Activated naive CD4-positive, alpha-beta T cell treated with anti-CD3 and anti-CD28 coated beads for 36 hours (primary cell): ENCODE measurements at regions of chr12 and their contacts with region 1.

Region 1: DNA sequence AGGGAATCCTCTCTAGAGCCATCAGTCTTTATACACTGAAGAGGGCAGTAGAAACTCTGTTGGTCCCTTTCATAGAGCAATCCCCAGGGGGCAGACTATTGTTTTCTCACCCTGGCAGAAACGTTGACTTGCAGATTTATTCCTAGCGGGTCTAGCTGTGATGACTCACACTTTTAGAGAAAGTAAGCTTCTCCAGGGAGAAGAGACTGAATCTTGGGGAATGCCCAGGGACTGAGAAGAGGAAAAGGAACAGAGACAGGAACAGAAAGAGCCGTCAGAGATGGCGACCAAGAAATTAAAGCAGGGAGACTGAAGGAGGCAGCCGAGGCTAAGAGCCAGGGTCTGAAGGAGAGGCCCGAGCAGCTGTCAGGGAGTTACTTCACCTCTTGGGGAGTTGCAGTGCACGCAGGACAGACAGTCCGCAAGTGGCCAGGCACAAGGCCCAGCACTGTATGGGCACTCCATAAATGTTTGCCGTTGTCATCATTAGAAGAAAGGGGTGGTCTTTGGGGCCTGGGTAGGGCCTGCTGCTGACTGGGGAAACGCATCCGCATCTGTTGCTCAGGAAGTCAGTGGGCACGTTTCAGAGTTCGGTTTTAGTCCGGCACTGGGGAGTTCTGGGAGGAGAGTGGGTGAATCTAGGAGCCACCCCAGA is 13.0 kb downstream of the PLEKHG6 start:
- DNase-seq: peak; percentile 55
- H3K4me3 Mint-ChIP-seq: peak overlapping the region; percentile 40
- H3K27ac Mint-ChIP-seq: peak overlapping the region; percentile 83
- H3K4me1 Mint-ChIP-seq: peaks cover 39% of the 10 kb centered on the region
- H3K27me3 Mint-ChIP-seq: no peaks in the 10 kb centered on the region

Region 2: GRCh38 chr12:6341417-6342139 is 18.1 kb after region 1 on chr12 and contains the start of gene TNFRSF1A:
- CTCF ChIA-PET with region 1: interaction called, 39 read pairs
- intact Hi-C with region 1: loop called (anchors 1 kb)
- DNase-seq: peak; percentile 73
- H3K4me3 Mint-ChIP-seq: peak within 1 kb of the TSS; percentile 17
- H3K27ac Mint-ChIP-seq: no peak within 1 kb of the TSS
- H3K4me1 Mint-ChIP-seq: peaks cover 38% of the 10 kb centered on the region
- H3K27me3 Mint-ChIP-seq: no peaks in the 10 kb centered on the region
- total RNA-seq, gene TNFRSF1A: 38.1 to 41.3 TPM

Region 3: GRCh38 chr12:6367065-6367968 is 43.9 kb after region 1 on chr12:
- CTCF ChIA-PET with region 1: interaction called, 17 read pairs
- intact Hi-C with region 1: loop called (anchors 1 kb)
- DNase-seq: peak; percentile 62
- H3K4me3 Mint-ChIP-seq: no peak overlapping the region
- H3K27ac Mint-ChIP-seq: no peak overlapping the region
- H3K4me1 Mint-ChIP-seq: peaks cover 29% of the 10 kb centered on the region
- H3K27me3 Mint-ChIP-seq: no peaks in the 10 kb centered on the region

Region 4: DNA sequence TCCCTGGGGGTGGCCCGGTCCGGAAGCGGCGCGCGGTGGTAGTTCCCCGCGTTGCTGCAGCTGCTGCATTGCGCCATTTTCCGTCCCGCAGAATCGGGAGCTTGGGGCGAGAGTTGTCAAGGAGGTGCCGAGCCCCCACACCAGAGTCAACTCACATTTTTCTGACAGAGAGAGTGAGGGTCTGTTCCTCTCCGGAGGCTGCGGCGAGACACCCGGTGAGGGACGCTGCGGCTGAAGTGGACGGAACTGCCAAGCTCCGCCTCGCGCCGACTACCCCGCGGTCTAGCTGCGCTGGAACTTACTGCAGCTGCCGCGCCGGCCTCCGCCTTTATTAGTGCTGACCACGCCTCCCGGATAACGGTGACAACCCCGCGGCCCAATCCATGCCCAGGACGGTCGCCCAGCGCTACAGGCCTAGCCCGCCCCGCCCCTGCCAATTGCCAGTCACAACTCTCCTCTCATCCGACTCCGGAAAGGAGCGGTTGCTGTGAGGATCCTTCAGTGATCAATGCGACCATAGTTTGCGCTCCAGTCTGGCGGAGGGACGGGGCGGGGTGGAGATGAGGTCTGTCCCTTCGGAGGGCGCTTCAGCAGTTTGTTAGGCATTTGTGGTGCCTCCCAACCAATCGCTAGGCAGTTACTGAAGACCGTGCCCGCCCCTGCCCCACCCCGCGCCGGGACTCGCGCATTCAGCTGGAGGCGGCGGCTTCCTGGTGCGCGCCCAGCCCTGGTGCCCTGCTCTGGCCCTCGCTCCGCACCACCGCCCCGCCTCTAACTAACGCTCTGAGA is 147.1 kb after region 1 on chr12 and contains the start of gene VAMP1:
- CTCF ChIA-PET with region 1: interaction called, 14 read pairs
- intact Hi-C with region 1: no loop called
- DNase-seq: peak; percentile 99
- H3K4me3 Mint-ChIP-seq: peak within 1 kb of the TSS; percentile 91
- H3K27ac Mint-ChIP-seq: peak within 1 kb of the TSS; percentile 90
- H3K4me1 Mint-ChIP-seq: peaks cover 53% of the 10 kb centered on the region
- H3K27me3 Mint-ChIP-seq: no peaks in the 10 kb centered on the region
- total RNA-seq, gene VAMP1: 31.9 to 33.5 TPM

Region 5: DNA sequence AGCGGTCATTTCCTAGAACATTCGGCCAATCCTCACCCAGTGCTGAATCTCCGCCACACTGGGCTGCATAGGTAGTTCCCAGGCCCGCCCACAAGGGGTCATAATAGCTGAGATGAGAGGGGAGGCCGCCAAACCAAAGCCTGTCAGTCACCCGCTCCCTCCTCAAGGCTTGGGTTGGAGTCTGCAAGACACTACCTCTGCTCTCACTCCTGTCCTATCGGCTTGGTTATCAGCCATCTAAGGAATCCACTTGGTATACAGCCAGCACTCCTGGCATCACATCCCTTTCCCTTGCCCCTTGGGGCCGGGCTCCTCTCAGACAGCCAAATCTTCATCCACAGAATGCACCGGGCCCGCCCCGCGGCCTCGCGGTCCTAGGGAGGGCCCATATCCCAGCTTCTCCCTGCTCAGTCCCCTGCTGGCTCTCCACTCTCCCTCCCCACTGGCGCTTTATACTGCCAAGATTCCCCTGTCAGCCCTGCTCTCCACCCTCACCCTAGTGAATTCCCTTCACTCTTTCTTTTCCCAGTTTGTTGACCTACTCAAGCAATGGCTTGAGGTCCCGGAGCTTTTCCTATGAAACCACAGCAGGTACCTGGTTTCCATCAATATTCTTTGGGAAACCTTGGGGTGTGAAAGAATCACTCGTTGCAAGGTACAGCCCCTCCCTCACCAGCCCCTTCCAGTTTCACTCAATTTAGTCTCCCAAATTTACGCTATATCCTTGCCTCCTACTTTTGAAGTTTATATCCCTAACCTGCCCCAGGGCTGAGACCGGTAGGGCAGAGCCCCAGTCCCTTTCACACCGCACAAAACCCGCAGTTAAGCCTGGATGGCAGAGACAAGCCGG is 230.9 kb after region 1 on chr12:
- CTCF ChIA-PET with region 1: interaction called, 4 read pairs
- intact Hi-C with region 1: loop called (anchors 1 kb)
- DNase-seq: peak; percentile 86
- H3K4me3 Mint-ChIP-seq: peak overlapping the region; percentile 78
- H3K27ac Mint-ChIP-seq: peak overlapping the region; percentile 1
- H3K4me1 Mint-ChIP-seq: peaks cover 52% of the 10 kb centered on the region
- H3K27me3 Mint-ChIP-seq: no peaks in the 10 kb centered on the region